Mammary epithelial cell (primary cell): ENCODE measurements at regions of chr7 and their contacts with region 1.

Region 1: GRCh38 chr7:24290004-24290641 is 6.1 kb downstream of the NPY start:
- DNase-seq: peak; percentile 48
- H3K4me3 ChIP-seq: no peak overlapping the region
- H3K27ac ChIP-seq: no peak overlapping the region
- H3K4me1 ChIP-seq: peaks cover 5% of the 10 kb centered on the region
- H3K27me3 ChIP-seq: peaks cover 14% of the 10 kb centered on the region
- CTCF ChIP-seq: peak; percentile 10 to 54

Region 2: DNA sequence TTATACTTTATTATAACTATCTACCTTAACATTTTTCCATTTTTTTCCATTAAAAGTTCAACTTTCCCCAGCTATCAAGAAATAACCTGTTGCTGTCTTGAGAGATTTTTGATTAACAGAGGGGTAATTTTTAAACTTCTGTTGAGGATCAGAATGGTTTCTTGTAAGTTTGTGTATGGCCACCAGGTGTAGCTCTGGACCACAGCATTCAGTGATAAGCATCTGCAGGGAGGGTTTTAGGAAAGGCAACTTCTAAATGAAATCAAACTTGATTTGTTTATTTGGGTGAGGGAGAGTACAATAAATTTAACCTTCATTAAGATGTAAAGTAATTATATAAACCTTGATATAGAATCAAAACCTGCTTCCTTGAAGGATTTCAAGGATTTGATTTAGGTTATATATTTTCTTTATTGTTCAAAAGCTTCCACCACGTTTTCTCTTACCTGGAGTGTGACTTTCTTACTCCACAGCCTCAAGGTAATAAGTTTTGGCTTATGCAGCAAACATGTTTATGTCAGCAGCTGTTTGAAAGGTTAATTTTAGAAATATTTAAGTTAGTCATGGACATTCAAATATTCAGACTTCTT is 426.8 kb before region 1 on chr7:
- CTCF ChIA-PET with region 1: no interaction called
- dilution Hi-C with region 1: no loop called
- in situ Hi-C with region 1: no loop called
- intact Hi-C with region 1: loop called (anchors 1 kb)
- DNase-seq: peak; percentile 20
- H3K4me3 ChIP-seq: no peak overlapping the region
- H3K27ac ChIP-seq: no peak overlapping the region
- H3K4me1 ChIP-seq: no peaks in the 10 kb centered on the region
- H3K27me3 ChIP-seq: no peaks in the 10 kb centered on the region
- CTCF ChIP-seq: peak; percentile 73 to 94

Region 3: GRCh38 chr7:24560772-24561171 is 270.6 kb after region 1 on chr7:
- CTCF ChIA-PET with region 1: no interaction called
- dilution Hi-C with region 1: no loop called
- in situ Hi-C with region 1: no loop called
- intact Hi-C with region 1: no loop called
- DNase-seq: no peak
- H3K4me3 ChIP-seq: no peak overlapping the region
- H3K27ac ChIP-seq: no peak overlapping the region
- H3K4me1 ChIP-seq: no peaks in the 10 kb centered on the region
- H3K27me3 ChIP-seq: peaks cover 9% of the 10 kb centered on the region
- CTCF ChIP-seq: no peak

Region 4: GRCh38 chr7:24572997-24573625 is 283.0 kb after region 1 on chr7 and contains the start of gene PALS2:
- CTCF ChIA-PET with region 1: no interaction called
- dilution Hi-C with region 1: no loop called
- in situ Hi-C with region 1: no loop called
- intact Hi-C with region 1: loop called (anchors 5 kb)
- DNase-seq: peak; percentile 80
- H3K4me3 ChIP-seq: peak within 1 kb of the TSS; percentile 84 to 91 (median 88)
- H3K27ac ChIP-seq: peak within 1 kb of the TSS; percentile 90
- H3K4me1 ChIP-seq: peaks cover 17% of the 10 kb centered on the region
- H3K27me3 ChIP-seq: no peaks in the 10 kb centered on the region
- CTCF ChIP-seq: no peak
- total RNA-seq, gene PALS2: 36.2 to 39.5 TPM

Region 5: GRCh38 chr7:25098096-25099046 is 808.2 kb after region 1 on chr7:
- CTCF ChIA-PET with region 1: no interaction called
- dilution Hi-C with region 1: no loop called
- in situ Hi-C with region 1: no loop called
- intact Hi-C with region 1: loop called (anchors 1 kb)
- DNase-seq: peak; percentile 31
- H3K4me3 ChIP-seq: no peak overlapping the region
- H3K27ac ChIP-seq: no peak overlapping the region
- H3K4me1 ChIP-seq: peaks cover 3% of the 10 kb centered on the region
- H3K27me3 ChIP-seq: no peaks in the 10 kb centered on the region
- CTCF ChIP-seq: peak; percentile 94 to 98